SK-N-SH (cell line): ENCODE measurements at regions of chr2 and their contacts with region 1.

Region 1: GRCh38 chr2:64330281-64331113 is 123.5 kb upstream of the LGALSL start:
- DNase-seq: peak; percentile 58
- H3K4me3 ChIP-seq: peak overlapping the region; percentile 29 to 61
- H3K27ac ChIP-seq: peak overlapping the region in 1 of 2 experiments; percentile 32; a peak in 1 of 4 replicates
- H3K4me1 ChIP-seq: peaks cover 0 to 2% of the 10 kb centered on the region in 2 experiments; a peak in 1 of 4 replicates
- H3K27me3 ChIP-seq: no peaks in the 10 kb centered on the region
- CTCF ChIP-seq: peak; percentile 97
- EP300 ChIP-seq: no peak
- RAD21 ChIP-seq: peak; percentile 95

Region 2: GRCh38 chr2:62939735-62940491 is 1390.6 kb before region 1 on chr2:
- CTCF ChIA-PET with region 1: no interaction called
- POLR2A ChIA-PET with region 1: no interaction called
- DNase-seq: no peak
- H3K4me3 ChIP-seq: no peak overlapping the region
- H3K27ac ChIP-seq: no peak overlapping the region
- H3K4me1 ChIP-seq: no peaks in the 10 kb centered on the region; a peak in 1 of 4 replicates
- H3K27me3 ChIP-seq: no peaks in the 10 kb centered on the region
- CTCF ChIP-seq: no peak
- EP300 ChIP-seq: no peak
- RAD21 ChIP-seq: no peak

Region 3: DNA sequence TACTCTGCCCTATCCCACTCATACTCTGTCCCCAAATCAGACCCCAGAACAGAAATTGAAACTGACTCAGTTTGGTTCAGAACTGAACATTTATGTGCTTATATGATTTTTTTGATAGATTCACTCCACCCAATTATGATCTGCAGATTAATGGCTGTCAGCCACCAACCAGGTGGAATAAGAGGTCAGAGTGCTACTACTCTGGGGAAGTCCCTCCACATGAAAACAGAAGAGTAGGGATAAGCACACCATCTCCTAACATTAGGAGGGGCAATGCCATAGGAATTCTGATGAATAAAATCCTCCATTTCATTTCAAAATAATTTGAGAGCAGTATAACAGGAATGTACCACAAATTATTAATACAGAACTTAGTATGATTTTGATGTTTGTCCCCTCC is 525.1 kb before region 1 on chr2:
- CTCF ChIA-PET with region 1: no interaction called
- POLR2A ChIA-PET with region 1: no interaction called
- DNase-seq: no peak
- H3K4me3 ChIP-seq: no peak overlapping the region
- H3K27ac ChIP-seq: no peak overlapping the region
- H3K4me1 ChIP-seq: no peaks in the 10 kb centered on the region
- H3K27me3 ChIP-seq: no peaks in the 10 kb centered on the region
- CTCF ChIP-seq: no peak
- EP300 ChIP-seq: no peak
- RAD21 ChIP-seq: no peak

Region 4: GRCh38 chr2:64052468-64053241 is 277.8 kb before region 1 on chr2:
- CTCF ChIA-PET with region 1: interaction called, 235 read pairs
- POLR2A ChIA-PET with region 1: interaction called, 5 read pairs
- DNase-seq: peak; percentile 39
- H3K4me3 ChIP-seq: no peak overlapping the region
- H3K27ac ChIP-seq: peak overlapping the region in 1 of 2 experiments; percentile 93; a peak in 2 of 4 replicates
- H3K4me1 ChIP-seq: peaks cover 0 to 19% of the 10 kb centered on the region in 2 experiments; a peak in 2 of 4 replicates
- H3K27me3 ChIP-seq: no peaks in the 10 kb centered on the region
- CTCF ChIP-seq: no peak
- EP300 ChIP-seq: peak in 1 of 2 experiments; percentile 72; a peak in 2 of 4 replicates
- RAD21 ChIP-seq: no peak

Region 5: GRCh38 chr2:64318476-64318748 is 12.1 kb before region 1 on chr2:
- CTCF ChIA-PET with region 1: interaction called, 50 read pairs
- POLR2A ChIA-PET with region 1: no interaction called
- DNase-seq: no peak
- H3K4me3 ChIP-seq: no peak overlapping the region
- H3K27ac ChIP-seq: no peak overlapping the region
- H3K4me1 ChIP-seq: peaks cover 0 to 2% of the 10 kb centered on the region in 2 experiments; a peak in 1 of 4 replicates
- H3K27me3 ChIP-seq: peaks cover 3% of the 10 kb centered on the region; the same call in 1 of the 2 replicates
- CTCF ChIP-seq: no peak
- EP300 ChIP-seq: no peak
- RAD21 ChIP-seq: no peak

Region 6: GRCh38 chr2:64488050-64488974 is 157.8 kb after region 1 on chr2:
- CTCF ChIA-PET with region 1: interaction called, 55 read pairs
- POLR2A ChIA-PET with region 1: no interaction called
- DNase-seq: peak; percentile 30
- H3K4me3 ChIP-seq: peak overlapping the region in 1 of 2 experiments; percentile 47; a peak in 1 of 4 replicates
- H3K27ac ChIP-seq: no peak overlapping the region; a peak in 1 of 4 replicates
- H3K4me1 ChIP-seq: peaks cover 0 to 16% of the 10 kb centered on the region in 2 experiments; a peak in 1 of 4 replicates
- H3K27me3 ChIP-seq: no peaks in the 10 kb centered on the region; the same call in 1 of the 2 replicates
- CTCF ChIP-seq: peak; percentile 79
- EP300 ChIP-seq: no peak
- RAD21 ChIP-seq: peak; percentile 59

Region 7: GRCh38 chr2:64562148-64562784 is 231.8 kb after region 1 on chr2:
- CTCF ChIA-PET with region 1: interaction called, 17 read pairs
- POLR2A ChIA-PET with region 1: interaction called, 4 read pairs
- DNase-seq: peak; percentile 12
- H3K4me3 ChIP-seq: no peak overlapping the region
- H3K27ac ChIP-seq: no peak overlapping the region
- H3K4me1 ChIP-seq: peaks cover 4 to 7% of the 10 kb centered on the region in 2 experiments; a peak in 3 of 4 replicates
- H3K27me3 ChIP-seq: no peaks in the 10 kb centered on the region
- CTCF ChIP-seq: peak; percentile 66
- EP300 ChIP-seq: no peak
- RAD21 ChIP-seq: peak; percentile 63

Region 8: GRCh38 chr2:64644177-64645004 is 313.9 kb after region 1 on chr2:
- CTCF ChIA-PET with region 1: interaction called, 15 read pairs
- POLR2A ChIA-PET with region 1: no interaction called
- DNase-seq: no peak
- H3K4me3 ChIP-seq: peak overlapping the region in 1 of 2 experiments; percentile 22; a peak in 2 of 4 replicates
- H3K27ac ChIP-seq: peak overlapping the region in 1 of 2 experiments; percentile 38; a peak in 3 of 4 replicates
- H3K4me1 ChIP-seq: peaks cover 20 to 62% of the 10 kb centered on the region in 2 experiments
- H3K27me3 ChIP-seq: no peaks in the 10 kb centered on the region
- CTCF ChIP-seq: no peak
- EP300 ChIP-seq: no peak
- RAD21 ChIP-seq: no peak

Region 9: GRCh38 chr2:64865073-64865830 is 534.8 kb after region 1 on chr2:
- CTCF ChIA-PET with region 1: interaction called, 16 read pairs
- POLR2A ChIA-PET with region 1: no interaction called
- DNase-seq: peak; percentile 95
- H3K4me3 ChIP-seq: peak overlapping the region; percentile 52 to 63
- H3K27ac ChIP-seq: peak overlapping the region; percentile 86 to 89
- H3K4me1 ChIP-seq: peaks cover 0 to 8% of the 10 kb centered on the region in 2 experiments; a peak in 1 of 4 replicates
- H3K27me3 ChIP-seq: no peaks in the 10 kb centered on the region
- CTCF ChIP-seq: peak; percentile 56; the same call in 1 of the 2 replicates
- EP300 ChIP-seq: peak in 1 of 2 experiments; percentile 27; a peak in 3 of 4 replicates
- RAD21 ChIP-seq: peak; percentile 76

Region 10: GRCh38 chr2:65015731-65016130 is 685.2 kb after region 1 on chr2:
- CTCF ChIA-PET with region 1: no interaction called
- POLR2A ChIA-PET with region 1: no interaction called
- DNase-seq: no peak
- H3K4me3 ChIP-seq: no peak overlapping the region
- H3K27ac ChIP-seq: no peak overlapping the region
- H3K4me1 ChIP-seq: peaks cover 0 to 6% of the 10 kb centered on the region in 2 experiments; a peak in 1 of 4 replicates
- H3K27me3 ChIP-seq: no peaks in the 10 kb centered on the region
- CTCF ChIP-seq: no peak
- EP300 ChIP-seq: no peak
- RAD21 ChIP-seq: no peak